PC-9 (cell line): ENCODE measurements at regions of chr5 and their contacts with region 1.

Region 1: DNA sequence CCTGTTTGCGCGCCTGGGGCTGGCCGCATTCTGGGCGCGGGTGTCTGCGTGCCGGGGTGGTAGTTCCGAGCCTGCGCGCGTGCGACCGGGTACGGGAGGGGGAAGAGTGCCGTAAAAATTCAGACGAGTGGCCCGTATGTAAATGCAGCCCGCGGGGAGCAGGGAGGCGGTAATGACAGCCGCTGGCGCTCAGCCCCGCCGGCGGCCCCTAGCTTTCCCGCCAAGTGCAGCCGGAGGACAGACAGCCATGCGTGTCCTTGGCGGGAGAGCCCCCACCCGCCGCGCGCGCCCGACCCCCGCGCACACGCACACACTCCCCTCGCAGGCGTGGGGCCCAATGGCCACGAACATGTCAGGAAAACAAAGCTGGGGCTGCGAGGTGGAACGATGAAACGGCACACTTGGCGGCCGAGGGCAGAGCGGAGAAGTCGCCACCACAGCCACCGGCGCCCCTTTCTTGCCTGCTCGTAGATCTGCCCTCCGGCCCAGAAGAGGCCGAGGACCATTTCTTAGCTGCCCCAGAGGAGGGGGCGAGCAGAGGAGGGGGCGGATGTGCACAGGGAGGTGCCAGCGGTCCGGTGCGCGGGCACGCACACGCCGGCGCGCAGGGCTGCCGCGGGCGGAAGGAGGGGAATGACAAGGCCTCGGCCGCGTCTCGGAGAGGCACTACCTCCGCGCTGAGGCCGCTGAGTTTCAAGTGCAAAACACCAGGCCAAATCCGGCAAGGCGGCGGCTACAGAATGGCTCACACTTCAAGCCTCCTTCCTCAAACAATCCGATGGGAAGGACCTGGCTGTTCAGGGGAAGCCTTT is 208.4 kb downstream of the MEF2C start:
- DNase-seq: peak in 1 of 2 experiments; percentile 72
- H3K4me3 ChIP-seq: peak overlapping the region; percentile 77
- H3K27ac ChIP-seq: peak overlapping the region; percentile 79
- H3K4me1 ChIP-seq: peaks cover 10% of the 10 kb centered on the region
- H3K27me3 ChIP-seq: no peaks in the 10 kb centered on the region
- CTCF ChIP-seq: no peak

Region 2: GRCh38 chr5:88171750-88172149 is 502.8 kb before region 1 on chr5:
- CTCF ChIA-PET with region 1: no interaction called
- POLR2A ChIA-PET with region 1: no interaction called
- intact Hi-C with region 1: no loop called
- DNase-seq: no peak
- H3K4me3 ChIP-seq: no peak overlapping the region
- H3K27ac ChIP-seq: no peak overlapping the region
- H3K4me1 ChIP-seq: peaks cover 16% of the 10 kb centered on the region
- H3K27me3 ChIP-seq: no peaks in the 10 kb centered on the region
- CTCF ChIP-seq: no peak

Region 3: GRCh38 chr5:88268385-88269184 is 406.0 kb before region 1 on chr5 and contains the start of gene TMEM161B:
- CTCF ChIA-PET with region 1: no interaction called
- POLR2A ChIA-PET with region 1: interaction called, 8 read pairs
- intact Hi-C with region 1: loop called (anchors 1 kb)
- DNase-seq: peak; percentile 87 to 93
- H3K4me3 ChIP-seq: peak within 1 kb of the TSS; percentile 93
- H3K27ac ChIP-seq: peak within 1 kb of the TSS; percentile 58
- H3K4me1 ChIP-seq: peaks cover 33% of the 10 kb centered on the region
- H3K27me3 ChIP-seq: no peaks in the 10 kb centered on the region
- CTCF ChIP-seq: no peak
- total RNA-seq, gene TMEM161B: 17.3 and 24.8 TPM in 2 replicates

Region 4: DNA sequence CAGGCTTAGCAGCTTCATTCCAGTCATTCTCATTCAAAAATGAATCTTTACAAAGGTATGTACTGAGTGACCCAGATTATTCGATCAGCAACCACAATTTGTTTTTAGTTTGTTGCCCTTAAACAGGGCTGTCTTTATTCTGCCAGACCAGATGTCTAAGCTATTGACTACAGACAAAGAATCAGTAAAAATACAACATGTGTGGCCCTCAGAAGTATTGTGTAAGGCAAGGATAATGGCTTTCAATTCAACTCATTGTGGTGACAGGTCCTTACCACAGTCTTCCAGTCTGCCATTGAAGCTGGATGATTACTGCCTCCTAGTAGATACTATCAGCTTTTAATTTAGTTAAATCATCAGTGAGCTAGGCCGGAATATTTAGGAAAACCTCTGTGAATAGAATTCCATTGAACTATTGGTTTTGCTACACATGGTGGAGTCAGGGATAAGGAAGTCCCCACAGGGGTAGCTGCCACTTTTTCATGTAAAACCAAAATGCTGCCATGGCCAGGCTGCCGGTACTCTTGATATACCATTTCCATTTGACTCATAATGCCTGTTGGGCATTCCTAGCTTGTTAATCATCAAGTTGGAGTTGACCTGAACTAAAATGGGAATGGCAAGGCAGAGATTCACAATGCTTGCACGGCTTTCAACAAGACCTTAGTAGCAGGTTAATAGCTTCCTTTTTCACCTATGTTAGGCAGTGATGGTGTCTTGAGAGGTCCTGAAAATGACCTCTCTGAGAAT is 32.8 kb after region 1 on chr5:
- CTCF ChIA-PET with region 1: no interaction called
- POLR2A ChIA-PET with region 1: interaction called, 10 read pairs
- intact Hi-C with region 1: no loop called
- DNase-seq: no peak
- H3K4me3 ChIP-seq: no peak overlapping the region
- H3K27ac ChIP-seq: no peak overlapping the region
- H3K4me1 ChIP-seq: no peaks in the 10 kb centered on the region
- H3K27me3 ChIP-seq: no peaks in the 10 kb centered on the region
- CTCF ChIP-seq: no peak